Caco-2 (cell line): ENCODE measurements at regions of chrX and their contacts with region 1.

Region 1: DNA sequence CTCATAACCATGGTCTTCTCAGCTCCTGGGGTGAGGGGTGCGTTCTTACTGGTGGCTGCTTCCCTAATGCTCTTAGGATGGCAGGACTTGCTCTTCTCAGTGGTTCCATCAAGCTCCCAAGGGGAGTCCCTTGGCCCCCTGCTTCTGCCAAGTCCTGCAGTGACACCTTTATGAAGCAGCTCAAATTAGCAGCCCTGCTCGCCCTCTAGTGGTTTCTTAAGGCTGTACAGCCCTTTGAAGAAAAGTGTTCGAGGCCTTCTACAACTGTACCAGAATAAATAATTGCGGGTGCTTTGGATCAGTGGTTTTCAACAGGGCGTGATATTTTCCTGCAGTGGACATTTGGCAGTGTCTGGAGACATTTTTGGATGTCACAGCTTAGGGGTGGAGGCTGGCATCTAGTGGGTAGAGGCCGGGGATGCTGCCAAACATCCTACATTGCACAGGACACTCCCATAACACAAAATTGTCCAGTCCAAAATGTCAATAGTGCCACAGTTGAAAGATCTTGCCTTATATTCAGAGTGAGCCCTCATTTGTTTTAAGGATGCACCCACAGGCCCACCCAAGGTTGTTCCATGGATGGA is 204.7 kb upstream of the S100G start:
- DNase-seq: peak in 1 of 2 experiments; percentile 36
- H3K4me3 ChIP-seq: no peak overlapping the region
- H3K4me3 Mint-ChIP-seq: no peak overlapping the region
- H3K27ac Mint-ChIP-seq: no peak overlapping the region
- H3K4me1 ChIP-seq: no peaks in the 10 kb centered on the region
- H3K4me1 Mint-ChIP-seq: no peaks in the 10 kb centered on the region
- H3K27me3 ChIP-seq: no peaks in the 10 kb centered on the region
- H3K27me3 Mint-ChIP-seq: no peaks in the 10 kb centered on the region
- CTCF ChIP-seq: peak; percentile 51 to 57

Region 2: DNA sequence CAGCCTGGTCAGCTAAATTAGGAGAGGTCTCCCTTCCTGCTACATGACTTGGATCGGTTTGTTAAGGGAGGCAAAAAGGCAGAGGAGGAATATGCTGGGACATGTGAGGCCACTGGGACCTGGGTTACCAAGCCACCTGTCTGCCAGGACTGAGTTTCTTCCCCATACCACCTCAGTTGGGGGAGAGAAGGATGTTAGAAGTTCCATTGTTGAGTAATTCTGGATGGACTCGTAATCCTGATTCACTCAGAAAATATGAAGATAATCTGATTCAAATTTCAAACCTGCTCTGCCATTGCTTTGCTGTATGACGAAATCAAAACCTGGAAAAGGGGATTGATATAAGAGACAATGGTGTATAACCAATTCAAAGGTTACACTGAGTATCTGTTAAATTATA is 107.3 kb after region 1 on chrX:
- CTCF ChIA-PET with region 1: no interaction called
- POLR2A ChIA-PET with region 1: no interaction called
- intact Hi-C with region 1: no loop called
- DNase-seq: no peak
- H3K4me3 ChIP-seq: no peak overlapping the region
- H3K4me3 Mint-ChIP-seq: no peak overlapping the region
- H3K27ac Mint-ChIP-seq: no peak overlapping the region
- H3K4me1 ChIP-seq: no peaks in the 10 kb centered on the region
- H3K4me1 Mint-ChIP-seq: no peaks in the 10 kb centered on the region
- H3K27me3 ChIP-seq: no peaks in the 10 kb centered on the region
- H3K27me3 Mint-ChIP-seq: no peaks in the 10 kb centered on the region
- CTCF ChIP-seq: no peak

Region 3: DNA sequence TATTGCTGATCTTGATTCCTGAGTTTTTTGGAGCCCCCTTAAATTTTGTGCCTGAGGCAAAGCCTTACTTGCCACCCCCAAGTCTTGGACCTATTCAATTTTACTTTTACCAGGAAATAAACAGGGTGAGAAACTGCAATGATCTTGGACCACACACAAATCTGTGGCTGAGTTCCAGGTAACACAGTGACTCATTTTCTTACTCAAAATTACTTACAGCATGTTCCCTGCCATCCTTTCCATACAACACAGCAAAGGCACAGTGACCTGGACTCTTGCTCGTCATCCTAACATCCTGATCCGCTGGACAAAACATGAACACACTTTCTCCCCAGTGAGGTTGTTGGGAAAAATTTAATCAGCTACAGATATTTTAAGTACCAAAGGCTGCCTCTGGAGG is 144.0 kb after region 1 on chrX:
- CTCF ChIA-PET with region 1: no interaction called
- POLR2A ChIA-PET with region 1: no interaction called
- intact Hi-C with region 1: loop called (anchors 10 kb)
- DNase-seq: no peak
- H3K4me3 ChIP-seq: no peak overlapping the region
- H3K4me3 Mint-ChIP-seq: no peak overlapping the region
- H3K27ac Mint-ChIP-seq: no peak overlapping the region
- H3K4me1 ChIP-seq: peaks cover 4% of the 10 kb centered on the region; the same call in 1 of the 2 replicates
- H3K4me1 Mint-ChIP-seq: no peaks in the 10 kb centered on the region
- H3K27me3 ChIP-seq: no peaks in the 10 kb centered on the region
- H3K27me3 Mint-ChIP-seq: no peaks in the 10 kb centered on the region
- CTCF ChIP-seq: no peak